Body of pancreas (tissue), 4 donors: ENCODE measurements at regions of chr10 and their contacts with region 1.

Region 1: DNA sequence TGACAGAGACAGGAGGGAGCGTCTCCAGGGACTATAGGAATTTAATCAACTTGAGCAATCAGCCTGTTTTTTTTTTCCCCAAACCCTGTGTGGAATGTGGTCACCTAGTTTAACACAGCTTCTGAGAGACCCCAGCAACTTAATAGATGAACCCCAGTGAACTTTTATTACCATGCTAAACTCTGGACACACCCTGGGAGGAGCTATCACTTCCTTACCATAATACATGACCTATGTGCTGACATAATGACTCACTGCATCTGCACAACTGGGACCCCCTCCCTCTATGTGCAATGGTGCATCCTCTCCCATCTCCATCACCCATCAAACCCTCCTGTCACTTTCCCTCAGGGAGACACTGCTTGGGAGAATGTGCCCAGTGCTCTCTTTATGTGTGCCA is 83.7 kb downstream of the EPC1 start:
- DNase-seq: no peak
- ATAC-seq: no peak
- H3K4me3 ChIP-seq: no peak overlapping the region
- H3K27ac ChIP-seq: no peak overlapping the region
- H3K4me1 ChIP-seq: no peaks in the 10 kb centered on the region
- H3K27me3 ChIP-seq: no peaks in the 10 kb centered on the region
- CTCF ChIP-seq: no peak
- POLR2A ChIP-seq: no peak

Region 2: GRCh38 chr10:32112055-32112454 is 151.2 kb before region 1 on chr10:
- intact Hi-C with region 1: no loop called
- DNase-seq: no peak
- ATAC-seq: peak; percentile 38
- H3K4me3 ChIP-seq: no peak overlapping the region
- H3K27ac ChIP-seq: no peak overlapping the region
- H3K4me1 ChIP-seq: peaks cover 6% of the 10 kb centered on the region
- H3K27me3 ChIP-seq: no peaks in the 10 kb centered on the region
- CTCF ChIP-seq: no peak
- POLR2A ChIP-seq: no peak

Region 3: GRCh38 chr10:32326119-32326518 is 62.8 kb after region 1 on chr10:
- intact Hi-C with region 1: loop called (anchors 10 kb)
- DNase-seq: no peak
- ATAC-seq: no peak
- H3K4me3 ChIP-seq: no peak overlapping the region
- H3K27ac ChIP-seq: no peak overlapping the region
- H3K4me1 ChIP-seq: peaks cover 62% of the 10 kb centered on the region
- H3K27me3 ChIP-seq: no peaks in the 10 kb centered on the region
- CTCF ChIP-seq: no peak
- POLR2A ChIP-seq: no peak